GM12878 (cell line): ENCODE measurements at regions of chr2 and their contacts with region 1.

Region 1: GRCh38 chr2:155368934-155369333 is 670.4 kb downstream of the KCNJ3 start:
- DNase-seq: no peak
- ATAC-seq: peak; percentile 64
- H3K4me3 ChIP-seq: no peak overlapping the region
- H3K27ac ChIP-seq: no peak overlapping the region
- H3K4me1 ChIP-seq: no peaks in the 10 kb centered on the region
- H3K27me3 ChIP-seq: no peaks in the 10 kb centered on the region
- CTCF ChIP-seq: peak; percentile 9 to 30 (median 14); a peak in 2 of 6 replicates
- EP300 ChIP-seq: no peak
- POLR2A ChIP-seq: no peak
- RAD21 ChIP-seq: no peak

Region 2: GRCh38 chr2:157055660-157056199 is 1686.8 kb after region 1 on chr2:
- CTCF ChIA-PET with region 1: no interaction called
- POLR2A ChIA-PET with region 1: no interaction called
- RAD21 ChIA-PET with region 1: interaction called, 5 read pairs
- SMC1A ChIA-PET with region 1: no interaction called
- in situ Hi-C with region 1: no loop called
- intact Hi-C with region 1: loop called (anchors 10 kb)
- DNase-seq: no peak
- ATAC-seq: no peak
- H3K4me3 ChIP-seq: no peak overlapping the region
- H3K27ac ChIP-seq: no peak overlapping the region
- H3K4me1 ChIP-seq: no peaks in the 10 kb centered on the region
- H3K27me3 ChIP-seq: peaks cover 0 to 2% of the 10 kb centered on the region in 2 experiments; a peak in 1 of 4 replicates
- CTCF ChIP-seq: peak in 2 of 3 experiments; percentile 14 to 28; a peak in 3 of 6 replicates
- EP300 ChIP-seq: no peak
- POLR2A ChIP-seq: no peak
- RAD21 ChIP-seq: peak; percentile 42; the same call in 1 of the 2 replicates